Naive thymus-derived CD4-positive, alpha-beta T cell (primary cell): ENCODE measurements at regions of chr12 and their contacts with region 1.

Region 1: DNA sequence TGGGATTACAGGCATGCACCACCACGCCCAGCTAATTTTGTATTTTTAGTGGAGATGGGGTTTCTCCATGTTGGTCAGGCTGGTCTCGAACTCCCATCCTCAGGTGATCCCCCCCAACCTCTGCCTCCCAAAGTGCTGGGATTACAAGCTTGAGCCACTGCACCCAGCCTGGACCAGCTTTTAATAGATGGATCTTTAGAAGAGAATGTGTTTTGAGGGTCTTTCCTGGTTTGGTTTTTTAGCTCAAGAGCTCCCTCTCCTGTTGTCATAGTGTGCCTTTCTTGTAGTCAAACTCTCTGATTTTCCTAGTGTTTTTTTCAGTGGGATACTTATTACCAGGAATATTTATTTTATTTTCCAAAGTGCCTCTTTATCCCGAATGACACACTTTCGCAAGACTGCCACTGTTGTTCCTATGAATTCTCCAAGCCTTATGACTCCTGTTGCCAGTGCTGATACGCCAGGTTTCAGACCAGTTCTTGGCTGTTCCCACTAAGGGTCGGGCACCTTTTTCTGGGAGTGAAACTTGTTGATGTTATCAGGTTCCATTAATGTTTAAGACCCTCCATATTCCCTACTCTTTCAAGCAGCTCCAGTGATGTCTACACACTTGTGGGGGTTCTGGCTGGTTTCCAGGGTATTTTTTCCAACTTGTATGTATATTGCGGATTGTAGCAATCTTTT is 31.5 kb upstream of the LIMA1 start:
- DNase-seq: no peak
- ATAC-seq: no peak
- H3K4me3 ChIP-seq: no peak overlapping the region
- H3K4me3 Mint-ChIP-seq: no peak overlapping the region
- H3K27ac ChIP-seq: no peak overlapping the region
- H3K27ac Mint-ChIP-seq: no peak overlapping the region
- H3K4me1 ChIP-seq: no peaks in the 10 kb centered on the region
- H3K4me1 Mint-ChIP-seq: peaks cover 0 to 3% (median 0%) of the 10 kb centered on the region in 7 donors
- H3K27me3 ChIP-seq: no peaks in the 10 kb centered on the region
- H3K27me3 Mint-ChIP-seq: no peaks in the 10 kb centered on the region

Region 2: DNA sequence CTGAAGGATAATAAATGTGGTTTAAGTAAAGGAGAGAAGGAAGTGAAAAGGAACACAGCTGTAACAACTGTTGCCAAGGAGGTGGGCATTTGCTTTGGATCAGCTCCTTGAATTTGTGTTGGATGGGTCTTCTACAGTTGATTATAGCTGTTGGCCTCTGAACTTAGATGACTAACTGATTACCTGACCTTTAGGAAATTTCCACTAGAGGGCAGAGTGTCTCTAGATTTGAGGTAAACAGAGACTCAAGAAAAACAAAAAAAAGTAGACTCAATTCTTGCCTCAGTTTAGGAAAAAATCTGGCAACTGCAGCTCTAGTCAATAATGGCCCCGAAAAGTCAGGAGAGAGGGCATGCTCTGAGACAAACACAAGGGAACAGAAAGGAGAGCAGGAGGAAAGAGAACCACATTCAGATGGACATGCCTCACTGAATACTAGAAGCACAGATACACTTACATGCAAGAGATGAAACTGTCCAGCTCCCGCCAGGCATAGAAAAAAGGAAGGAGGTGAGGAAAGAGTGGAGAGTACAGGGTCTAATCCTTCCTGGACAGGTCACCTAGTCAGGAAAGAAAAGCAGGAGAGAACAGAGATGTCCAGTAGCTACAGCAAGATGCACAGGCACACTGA is 182.2 kb before region 1 on chr12:
- CTCF ChIA-PET with region 1: interaction called, 3 read pairs
- POLR2A ChIA-PET with region 1: no interaction called
- intact Hi-C with region 1: loop called (anchors 2 to 5 kb)
- DNase-seq: peak in 7 of 9 donors; percentile 29 to 62 (median 49)
- ATAC-seq: peak; percentile 61
- H3K4me3 ChIP-seq: no peak overlapping the region
- H3K4me3 Mint-ChIP-seq: no peak overlapping the region
- H3K27ac ChIP-seq: no peak overlapping the region
- H3K27ac Mint-ChIP-seq: peak overlapping the region in 8 of 9 donors; percentile 2 to 79 (median 36)
- H3K4me1 ChIP-seq: no peaks in the 10 kb centered on the region
- H3K4me1 Mint-ChIP-seq: peaks cover 9 to 19% (median 14%) of the 10 kb centered on the region in 7 donors
- H3K27me3 ChIP-seq: no peaks in the 10 kb centered on the region
- H3K27me3 Mint-ChIP-seq: no peaks in the 10 kb centered on the region

Region 3: GRCh38 chr12:50187084-50187900 is 127.5 kb before region 1 on chr12:
- CTCF ChIA-PET with region 1: interaction called, 7 read pairs
- POLR2A ChIA-PET with region 1: no interaction called
- intact Hi-C with region 1: loop called in 1 of 2 experiments (anchors 1 kb)
- DNase-seq: peak in 1 of 9 donors; percentile 49
- ATAC-seq: peak; percentile 37
- H3K4me3 ChIP-seq: no peak overlapping the region
- H3K4me3 Mint-ChIP-seq: peak overlapping the region in 1 of 10 donors; percentile 70
- H3K27ac ChIP-seq: no peak overlapping the region
- H3K27ac Mint-ChIP-seq: peak overlapping the region in 6 of 9 donors; percentile 10 to 92 (median 71)
- H3K4me1 ChIP-seq: peaks cover 0 to 4% of the 10 kb centered on the region in 2 donors
- H3K4me1 Mint-ChIP-seq: peaks cover 12 to 57% (median 14%) of the 10 kb centered on the region in 7 donors
- H3K27me3 ChIP-seq: no peaks in the 10 kb centered on the region
- H3K27me3 Mint-ChIP-seq: no peaks in the 10 kb centered on the region

Region 4: DNA sequence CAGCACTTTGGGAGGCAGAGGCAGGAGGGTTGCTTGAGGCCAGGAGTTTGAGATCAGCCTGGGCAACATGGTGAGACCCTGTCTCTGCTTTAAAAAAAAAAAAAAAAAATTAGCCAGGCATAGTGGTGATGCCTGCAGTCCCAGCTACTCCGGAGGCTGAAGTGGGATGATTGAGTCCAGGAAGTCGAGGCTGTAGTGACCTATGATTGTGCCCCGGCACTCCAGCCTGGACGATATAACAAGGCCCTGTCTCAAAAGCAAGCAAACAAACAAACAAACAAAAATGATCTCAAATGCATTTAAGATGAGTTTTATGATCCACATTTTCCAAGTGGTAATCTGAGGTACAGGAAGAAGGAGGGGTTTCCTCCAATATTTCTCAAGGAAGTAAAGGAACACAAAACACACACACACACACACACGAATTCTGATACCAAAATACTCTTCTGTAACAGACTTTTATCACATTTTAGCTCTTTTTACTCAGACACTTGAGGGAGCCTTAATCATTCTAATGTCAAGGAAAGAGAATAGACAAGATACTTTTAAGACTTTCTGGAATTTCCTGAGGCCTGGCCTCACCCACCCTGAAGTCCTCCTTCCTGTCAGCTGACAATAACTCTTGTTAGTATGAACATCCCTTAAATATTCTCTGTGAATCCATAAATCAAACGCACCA is 103.2 kb before region 1 on chr12:
- CTCF ChIA-PET with region 1: interaction called, 3 read pairs
- POLR2A ChIA-PET with region 1: no interaction called
- intact Hi-C with region 1: loop called in 1 of 2 experiments (anchors 5 kb)
- DNase-seq: peak in 1 of 9 donors; percentile 20
- ATAC-seq: no peak
- H3K4me3 ChIP-seq: peak overlapping the region; percentile 36
- H3K4me3 Mint-ChIP-seq: peak overlapping the region; percentile 69 to 86 (median 74)
- H3K27ac ChIP-seq: peak overlapping the region; percentile 65
- H3K27ac Mint-ChIP-seq: peak overlapping the region; percentile 86 to 98 (median 94)
- H3K4me1 ChIP-seq: peaks cover 15 to 35% of the 10 kb centered on the region in 2 donors
- H3K4me1 Mint-ChIP-seq: peaks cover 25 to 52% (median 44%) of the 10 kb centered on the region in 7 donors
- H3K27me3 ChIP-seq: no peaks in the 10 kb centered on the region
- H3K27me3 Mint-ChIP-seq: no peaks in the 10 kb centered on the region

Region 5: DNA sequence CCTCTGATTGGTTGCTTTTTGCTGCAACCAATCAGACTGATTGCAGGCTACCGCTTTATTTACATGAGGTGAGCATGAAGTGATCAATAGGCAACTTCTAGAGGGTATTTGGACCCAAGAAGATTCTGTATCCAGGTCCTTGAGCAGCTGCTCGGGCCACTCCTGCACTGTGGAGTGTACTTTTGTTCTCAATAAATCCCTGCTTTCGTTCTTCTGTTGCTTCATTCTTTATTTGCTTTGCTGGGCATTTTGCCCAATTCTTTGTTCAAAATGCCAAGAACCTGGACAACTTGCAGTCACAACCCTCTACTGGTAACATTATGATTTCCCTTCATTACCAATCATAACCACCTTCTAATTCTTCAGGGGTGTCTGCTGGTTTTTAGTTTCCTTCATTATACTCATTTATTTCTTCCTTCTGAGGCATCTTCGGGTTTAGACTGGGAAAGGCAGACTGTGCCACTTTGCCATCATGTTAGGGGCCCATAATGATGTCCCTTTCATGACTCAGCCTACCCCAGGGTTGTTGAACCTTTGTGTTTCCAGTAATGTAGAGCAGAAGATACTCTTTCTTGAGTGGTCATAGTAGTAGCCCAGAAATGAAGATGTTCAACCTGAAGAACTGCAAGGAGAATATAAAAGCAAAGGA is 12.0 kb after region 1 on chr12:
- CTCF ChIA-PET with region 1: interaction called, 10 read pairs
- POLR2A ChIA-PET with region 1: no interaction called
- intact Hi-C with region 1: no loop called
- DNase-seq: no peak
- ATAC-seq: no peak
- H3K4me3 ChIP-seq: no peak overlapping the region
- H3K4me3 Mint-ChIP-seq: no peak overlapping the region
- H3K27ac ChIP-seq: no peak overlapping the region
- H3K27ac Mint-ChIP-seq: no peak overlapping the region
- H3K4me1 ChIP-seq: no peaks in the 10 kb centered on the region
- H3K4me1 Mint-ChIP-seq: peaks cover 0 to 4% (median 0%) of the 10 kb centered on the region in 7 donors
- H3K27me3 ChIP-seq: no peaks in the 10 kb centered on the region
- H3K27me3 Mint-ChIP-seq: no peaks in the 10 kb centered on the region

Region 6: GRCh38 chr12:50453874-50454273 is 139.1 kb after region 1 on chr12:
- CTCF ChIA-PET with region 1: no interaction called
- POLR2A ChIA-PET with region 1: no interaction called
- intact Hi-C with region 1: no loop called
- DNase-seq: no peak
- ATAC-seq: no peak
- H3K4me3 ChIP-seq: no peak overlapping the region
- H3K4me3 Mint-ChIP-seq: no peak overlapping the region
- H3K27ac ChIP-seq: no peak overlapping the region
- H3K27ac Mint-ChIP-seq: no peak overlapping the region
- H3K4me1 ChIP-seq: no peaks in the 10 kb centered on the region
- H3K4me1 Mint-ChIP-seq: peaks cover 0 to 5% (median 4%) of the 10 kb centered on the region in 7 donors
- H3K27me3 ChIP-seq: no peaks in the 10 kb centered on the region
- H3K27me3 Mint-ChIP-seq: no peaks in the 10 kb centered on the region

Region 7: GRCh38 chr12:51449577-51450246 is 1134.9 kb after region 1 on chr12:
- CTCF ChIA-PET with region 1: no interaction called
- POLR2A ChIA-PET with region 1: no interaction called
- intact Hi-C with region 1: no loop called
- DNase-seq: no peak
- ATAC-seq: no peak
- H3K4me3 ChIP-seq: no peak overlapping the region
- H3K4me3 Mint-ChIP-seq: no peak overlapping the region
- H3K27ac ChIP-seq: no peak overlapping the region
- H3K27ac Mint-ChIP-seq: no peak overlapping the region
- H3K4me1 ChIP-seq: no peaks in the 10 kb centered on the region
- H3K4me1 Mint-ChIP-seq: peaks cover 0 to 10% (median 3%) of the 10 kb centered on the region in 7 donors
- H3K27me3 ChIP-seq: no peaks in the 10 kb centered on the region
- H3K27me3 Mint-ChIP-seq: peaks cover 0 to 6% (median 0%) of the 10 kb centered on the region in 5 donors